Mammary epithelial cell (primary cell): ENCODE measurements at regions of chr2 and their contacts with region 1.

Region 1: DNA sequence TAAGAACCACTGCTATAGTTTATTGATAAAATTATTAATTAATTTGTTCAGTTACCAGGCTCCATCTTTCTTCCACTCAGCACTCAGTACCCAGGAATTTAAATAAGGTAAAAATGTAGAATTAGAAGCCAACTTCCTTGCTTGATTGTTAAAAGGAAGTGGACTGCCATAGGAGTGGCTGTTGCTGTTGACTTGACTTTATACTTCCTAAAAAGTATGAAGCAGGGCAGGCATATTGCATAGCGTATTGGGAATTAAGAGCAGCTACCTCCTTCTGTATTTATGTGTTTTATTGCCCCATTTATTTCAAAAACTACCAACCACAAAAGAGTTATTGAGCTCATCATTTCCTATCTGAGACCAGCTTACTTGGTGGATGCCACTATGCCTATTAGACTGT is 27.9 kb downstream of the PSMD1 start:
- DNase-seq: no peak
- H3K4me3 ChIP-seq: no peak overlapping the region
- H3K27ac ChIP-seq: no peak overlapping the region
- H3K4me1 ChIP-seq: no peaks in the 10 kb centered on the region
- H3K27me3 ChIP-seq: no peaks in the 10 kb centered on the region
- CTCF ChIP-seq: no peak

Region 2: DNA sequence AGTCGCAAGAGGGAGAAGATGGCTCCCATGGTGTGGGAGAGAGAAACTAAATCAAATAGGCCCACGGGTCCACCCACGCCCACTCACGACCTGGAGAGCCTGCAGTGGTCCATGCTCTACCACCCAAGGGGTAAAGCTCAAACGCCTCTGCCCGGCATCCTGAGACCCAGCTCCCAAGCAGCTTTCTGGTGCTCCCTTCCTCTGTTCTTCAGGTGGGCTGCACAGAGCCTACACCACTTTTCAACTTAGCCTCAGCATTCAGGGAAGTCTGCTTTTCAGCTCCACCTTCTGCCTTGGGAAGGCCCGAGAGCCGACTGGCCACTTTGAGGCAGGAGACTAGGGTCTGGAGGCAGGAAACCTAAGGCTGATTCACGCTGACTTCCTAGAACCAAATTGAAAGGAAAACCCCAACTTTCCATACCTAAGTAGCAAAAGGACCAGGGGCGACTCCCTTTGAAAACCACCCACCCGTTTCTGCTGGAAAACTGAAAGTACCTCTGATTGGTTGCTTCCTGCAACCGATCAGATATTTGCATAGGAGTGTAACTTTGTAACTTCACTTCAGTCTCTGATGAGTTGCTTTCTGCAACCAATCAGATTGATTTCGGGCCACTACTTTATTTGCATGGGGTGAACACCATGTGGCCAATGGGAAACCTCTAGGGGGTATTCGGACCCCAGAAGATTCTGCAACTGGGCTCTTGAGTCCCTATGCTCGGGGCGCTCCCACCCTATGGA is 115.5 kb before region 1 on chr2:
- CTCF ChIA-PET with region 1: no interaction called
- dilution Hi-C with region 1: no loop called
- in situ Hi-C with region 1: no loop called
- intact Hi-C with region 1: no loop called
- DNase-seq: no peak
- H3K4me3 ChIP-seq: no peak overlapping the region
- H3K27ac ChIP-seq: no peak overlapping the region
- H3K4me1 ChIP-seq: peaks cover 2% of the 10 kb centered on the region
- H3K27me3 ChIP-seq: no peaks in the 10 kb centered on the region
- CTCF ChIP-seq: no peak

Region 3: GRCh38 chr2:231170055-231170454 is 85.5 kb after region 1 on chr2:
- CTCF ChIA-PET with region 1: no interaction called
- dilution Hi-C with region 1: loop called (anchors 5 kb)
- in situ Hi-C with region 1: no loop called
- intact Hi-C with region 1: no loop called
- DNase-seq: no peak
- H3K4me3 ChIP-seq: no peak overlapping the region
- H3K27ac ChIP-seq: no peak overlapping the region
- H3K4me1 ChIP-seq: no peaks in the 10 kb centered on the region
- H3K27me3 ChIP-seq: no peaks in the 10 kb centered on the region
- CTCF ChIP-seq: no peak

Region 4: GRCh38 chr2:231819447-231820042 is 735.0 kb after region 1 on chr2:
- CTCF ChIA-PET with region 1: no interaction called
- dilution Hi-C with region 1: no loop called
- in situ Hi-C with region 1: no loop called
- intact Hi-C with region 1: no loop called
- DNase-seq: no peak
- H3K4me3 ChIP-seq: no peak overlapping the region
- H3K27ac ChIP-seq: no peak overlapping the region
- H3K4me1 ChIP-seq: no peaks in the 10 kb centered on the region
- H3K27me3 ChIP-seq: no peaks in the 10 kb centered on the region
- CTCF ChIP-seq: no peak